Calu3 (cell line): ENCODE measurements at regions of chr19 and their contacts with region 1.

Region 1: GRCh38 chr19:38949580-38950367 is 19.0 kb downstream of the MRPS12 start:
- DNase-seq: peak; percentile 93
- H3K4me3 Mint-ChIP-seq: peak overlapping the region; percentile 65
- H3K27ac Mint-ChIP-seq: no peak overlapping the region
- H3K4me1 Mint-ChIP-seq: peaks cover 17% of the 10 kb centered on the region
- H3K27me3 Mint-ChIP-seq: no peaks in the 10 kb centered on the region
- CTCF ChIP-seq: no peak

Region 2: DNA sequence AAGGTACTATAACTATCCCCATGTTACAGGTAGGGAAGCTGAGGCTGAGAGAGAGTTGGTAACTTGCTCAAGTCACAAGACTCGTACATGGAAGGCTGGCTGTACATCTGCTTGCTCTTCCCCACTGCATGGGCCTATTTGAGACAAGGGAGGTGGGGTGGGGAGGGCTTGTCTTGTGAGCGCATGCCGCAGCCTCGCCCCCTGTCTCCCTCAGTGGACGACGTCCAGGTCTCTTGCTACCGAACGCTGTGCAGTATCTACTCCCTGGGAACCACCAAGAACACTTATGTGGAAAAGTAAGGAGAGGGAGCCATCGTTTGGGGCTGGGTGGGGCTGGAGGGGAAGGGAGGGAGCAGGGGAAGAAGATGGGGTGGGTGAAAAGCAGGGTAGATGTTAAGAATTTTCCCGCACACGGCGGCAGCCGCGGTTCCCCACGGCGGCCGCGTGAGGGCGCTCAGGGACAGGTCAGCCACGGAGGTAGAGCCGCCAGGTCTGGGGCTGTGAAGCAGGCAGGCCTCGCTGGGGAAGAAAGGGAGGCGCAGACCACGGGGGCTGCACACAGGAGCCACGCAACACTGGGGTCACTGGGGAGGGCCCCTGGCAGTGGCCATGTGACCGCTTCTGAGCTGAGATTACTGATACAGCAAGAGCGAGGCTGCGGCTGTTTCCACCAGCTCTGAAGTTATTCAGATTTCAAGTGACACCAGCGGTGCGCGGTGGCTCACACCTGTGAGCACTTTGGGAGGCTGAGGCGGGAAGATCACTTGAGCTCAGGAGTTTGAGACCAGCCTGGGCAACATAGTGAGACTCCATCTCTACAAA is 434.8 kb before region 1 on chr19:
- CTCF ChIA-PET with region 1: no interaction called
- intact Hi-C with region 1: loop called (anchors 1 kb)
- DNase-seq: peak; percentile 88
- H3K4me3 Mint-ChIP-seq: peak overlapping the region; percentile 34
- H3K27ac Mint-ChIP-seq: peak overlapping the region; percentile 18
- H3K4me1 Mint-ChIP-seq: no peaks in the 10 kb centered on the region
- H3K27me3 Mint-ChIP-seq: peaks cover 33% of the 10 kb centered on the region
- CTCF ChIP-seq: peak; percentile 95